ENCODE measurements at regions of chr13 and their contacts with region 1.

Region 1: GRCh38 chr13:46211483-46212351 is at the start of gene LRRC63:
- DNase-seq: peak; percentile 90
- ATAC-seq: peak; percentile 96
- H3K4me3 Mint-ChIP-seq: peak within 1 kb of the TSS; percentile 76
- H3K27ac Mint-ChIP-seq: peak within 1 kb of the TSS; percentile 88
- H3K4me1 Mint-ChIP-seq: peaks cover 23% of the 10 kb centered on the region
- H3K27me3 Mint-ChIP-seq: no peaks in the 10 kb centered on the region
- total RNA-seq, gene LRRC63: 0.50 to 0.67 TPM

Region 2: GRCh38 chr13:46052319-46053161 is 159.2 kb before region 1 on chr13 and contains the start of gene ZC3H13:
- CTCF ChIA-PET with region 1: no interaction called
- POLR2A ChIA-PET with region 1: no interaction called
- intact Hi-C with region 1: loop called in 1 of 2 experiments (anchors 1 kb)
- DNase-seq: peak; percentile 96
- ATAC-seq: peak; percentile 99
- H3K4me3 Mint-ChIP-seq: peak within 1 kb of the TSS; percentile 83
- H3K27ac Mint-ChIP-seq: peak within 1 kb of the TSS; percentile 94
- H3K4me1 Mint-ChIP-seq: peaks cover 34% of the 10 kb centered on the region
- H3K27me3 Mint-ChIP-seq: peaks cover 2% of the 10 kb centered on the region
- total RNA-seq, gene ZC3H13: 38.5 to 52.8 TPM

Region 3: DNA sequence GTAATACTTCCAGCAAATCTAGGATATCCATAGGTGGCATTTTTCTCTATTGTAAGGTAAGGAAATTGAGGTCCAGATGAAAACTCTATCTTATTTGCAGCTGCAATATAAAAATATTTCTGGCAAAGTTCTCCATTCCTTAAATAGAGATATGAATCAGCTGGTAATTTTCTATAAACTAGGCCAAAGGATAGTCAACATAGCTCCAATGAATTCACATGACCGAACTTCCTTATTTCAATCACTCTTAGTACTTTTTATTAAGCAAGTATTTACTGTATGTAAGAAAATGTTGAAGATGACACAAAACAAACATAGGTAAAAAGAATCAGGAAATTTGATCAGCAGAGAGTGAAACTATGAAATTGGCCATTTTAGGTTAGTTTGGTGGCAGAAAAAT is 16.7 kb before region 1 on chr13:
- CTCF ChIA-PET with region 1: no interaction called
- POLR2A ChIA-PET with region 1: no interaction called
- intact Hi-C with region 1: no loop called
- DNase-seq: no peak
- ATAC-seq: no peak
- H3K4me3 Mint-ChIP-seq: no peak overlapping the region
- H3K27ac Mint-ChIP-seq: no peak overlapping the region
- H3K4me1 Mint-ChIP-seq: peaks cover 5% of the 10 kb centered on the region
- H3K27me3 Mint-ChIP-seq: no peaks in the 10 kb centered on the region

Measured in activated CD4-positive, alpha-beta T cell treated with anti-CD3 and anti-CD28 coated beads for 36 hours (primary cell).